ENCODE measurements at regions of chr21 and their contacts with region 1.

Region 1: GRCh38 chr21:42258153-42258884 is 39.4 kb downstream of the ABCG1 start:
- DNase-seq: peak; percentile 94
- H3K4me3 Mint-ChIP-seq: no peak overlapping the region
- H3K27ac Mint-ChIP-seq: no peak overlapping the region
- H3K4me1 Mint-ChIP-seq: peaks cover 16% of the 10 kb centered on the region
- H3K27me3 Mint-ChIP-seq: peaks cover 2% of the 10 kb centered on the region

Region 2: DNA sequence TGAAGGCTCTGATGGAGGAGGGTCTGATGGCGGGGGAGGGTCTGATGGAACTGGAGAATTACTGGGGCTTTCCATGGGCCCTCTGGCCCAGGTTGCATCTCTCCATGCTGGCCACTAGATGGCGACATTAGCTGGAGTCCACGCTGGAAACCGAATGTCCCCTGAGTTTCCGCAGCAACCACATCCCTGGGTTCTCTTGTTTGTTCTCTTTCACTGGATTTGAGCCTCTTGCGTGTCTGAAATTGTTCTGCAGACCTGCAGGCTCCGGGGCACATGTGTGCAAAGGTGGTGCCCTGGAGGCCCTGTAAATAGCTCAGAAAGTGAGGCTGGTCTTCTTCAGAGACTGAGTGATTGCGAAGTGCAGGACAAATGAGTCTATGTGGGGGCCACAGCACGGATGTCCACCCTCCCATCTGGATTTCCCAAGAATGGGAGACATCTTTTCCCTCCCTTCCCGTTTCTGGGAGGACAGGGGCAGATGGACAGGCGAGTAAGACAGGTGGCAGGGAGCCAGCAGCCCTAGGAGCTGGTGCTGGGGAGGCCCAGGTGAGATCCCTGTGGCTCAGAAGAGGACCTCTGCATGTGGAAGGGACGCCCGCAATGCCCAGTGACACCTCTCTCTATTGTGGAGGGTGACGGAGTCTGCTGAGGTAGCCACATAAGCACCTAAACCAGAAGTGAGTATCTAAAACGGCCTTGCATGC is 112.6 kb before region 1 on chr21:
- intact Hi-C with region 1: loop called (anchors 1 kb)
- DNase-seq: peak; percentile 91
- H3K4me3 Mint-ChIP-seq: no peak overlapping the region
- H3K27ac Mint-ChIP-seq: peak overlapping the region; percentile 22
- H3K4me1 Mint-ChIP-seq: peaks cover 6% of the 10 kb centered on the region
- H3K27me3 Mint-ChIP-seq: peaks cover 8% of the 10 kb centered on the region

Region 3: GRCh38 chr21:42164064-42164789 is 94.1 kb before region 1 on chr21:
- intact Hi-C with region 1: loop called (anchors 1 kb)
- DNase-seq: peak; percentile 88
- H3K4me3 Mint-ChIP-seq: no peak overlapping the region
- H3K27ac Mint-ChIP-seq: no peak overlapping the region
- H3K4me1 Mint-ChIP-seq: peaks cover 25% of the 10 kb centered on the region
- H3K27me3 Mint-ChIP-seq: no peaks in the 10 kb centered on the region

Region 4: DNA sequence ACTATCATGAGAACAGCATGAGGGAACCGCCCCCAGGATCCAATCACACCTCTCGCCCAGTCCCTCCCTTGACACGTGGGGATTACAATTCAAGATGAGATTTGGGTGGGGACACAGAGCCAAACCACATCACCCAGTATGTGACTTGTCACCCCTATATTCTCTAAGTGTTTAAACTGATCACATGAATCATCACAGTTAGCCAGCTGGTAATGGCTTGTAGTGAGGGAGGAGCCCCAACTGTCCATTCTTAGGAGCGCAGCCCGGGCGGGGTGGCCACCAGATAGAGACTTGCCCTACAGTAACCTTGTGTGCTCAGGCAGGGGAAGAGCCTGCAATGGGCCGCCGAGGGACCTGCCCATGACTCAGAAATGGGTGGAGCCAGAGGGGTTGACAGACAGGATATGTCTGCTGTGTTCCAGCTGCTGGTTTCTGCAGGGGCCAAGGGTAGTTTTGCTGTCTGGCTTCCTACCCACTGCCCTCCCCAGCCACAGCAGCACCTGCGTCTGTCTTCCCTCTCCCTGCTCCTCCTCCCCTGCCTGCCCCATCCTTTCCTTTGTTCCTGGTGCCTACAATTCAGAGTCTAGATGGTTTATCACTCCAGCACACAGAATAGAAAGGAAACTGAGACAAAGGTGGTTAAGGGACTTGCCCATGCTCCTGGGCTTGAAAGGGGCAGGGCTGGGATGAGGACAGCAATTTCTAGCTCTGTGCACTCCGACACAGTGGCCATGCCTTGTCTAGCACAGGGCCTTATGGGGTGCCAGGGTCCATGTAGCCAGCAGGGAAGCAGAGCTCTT is 30.2 kb before region 1 on chr21:
- intact Hi-C with region 1: loop called (anchors 1 kb)
- DNase-seq: peak; percentile 97
- H3K4me3 Mint-ChIP-seq: peak overlapping the region; percentile 57
- H3K27ac Mint-ChIP-seq: peak overlapping the region; percentile 87
- H3K4me1 Mint-ChIP-seq: peaks cover 68% of the 10 kb centered on the region
- H3K27me3 Mint-ChIP-seq: no peaks in the 10 kb centered on the region

Region 5: DNA sequence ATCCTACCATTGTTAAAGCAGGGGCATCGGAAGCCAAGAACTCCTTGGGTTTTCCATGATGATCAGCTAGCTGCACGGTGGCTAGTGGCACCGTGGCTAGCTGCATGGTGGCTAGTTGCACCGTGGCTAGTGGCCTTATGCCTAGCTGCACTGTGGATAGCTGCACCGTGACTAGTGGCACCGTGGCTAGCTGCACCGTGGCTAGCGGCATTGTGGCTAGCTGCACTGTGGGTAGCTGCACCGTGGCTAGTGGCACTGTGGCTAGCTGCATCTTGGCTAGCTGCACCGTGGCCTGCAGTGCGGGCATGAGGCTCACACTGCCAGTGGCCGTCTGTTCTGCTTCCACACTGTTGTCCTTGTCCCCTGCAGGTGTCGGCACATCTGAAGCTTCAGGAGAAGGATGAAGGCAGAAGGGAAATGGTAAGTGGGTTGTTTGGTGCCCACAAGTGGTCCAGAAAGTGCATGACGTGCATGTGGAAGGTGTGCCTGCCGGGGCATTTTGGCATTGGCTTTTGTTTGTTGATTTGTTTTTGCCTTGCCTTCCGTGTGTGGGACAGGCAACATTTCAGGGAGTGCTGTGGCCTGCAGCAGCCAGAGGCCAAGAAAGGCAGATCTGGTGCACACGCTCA is 18.3 kb after region 1 on chr21:
- intact Hi-C with region 1: no loop called
- DNase-seq: no peak
- H3K4me3 Mint-ChIP-seq: no peak overlapping the region
- H3K27ac Mint-ChIP-seq: no peak overlapping the region
- H3K4me1 Mint-ChIP-seq: no peaks in the 10 kb centered on the region
- H3K27me3 Mint-ChIP-seq: no peaks in the 10 kb centered on the region

Measured in activated CD4-positive, alpha-beta T cell treated with anti-CD3 and anti-CD28 coated beads, Interleukin-2, amount 10 ng/mL, durations not matched to agents 24 days and 14 days (primary cell).